ENCODE measurements at regions of chr2 and their contacts with region 1.

Region 1: DNA sequence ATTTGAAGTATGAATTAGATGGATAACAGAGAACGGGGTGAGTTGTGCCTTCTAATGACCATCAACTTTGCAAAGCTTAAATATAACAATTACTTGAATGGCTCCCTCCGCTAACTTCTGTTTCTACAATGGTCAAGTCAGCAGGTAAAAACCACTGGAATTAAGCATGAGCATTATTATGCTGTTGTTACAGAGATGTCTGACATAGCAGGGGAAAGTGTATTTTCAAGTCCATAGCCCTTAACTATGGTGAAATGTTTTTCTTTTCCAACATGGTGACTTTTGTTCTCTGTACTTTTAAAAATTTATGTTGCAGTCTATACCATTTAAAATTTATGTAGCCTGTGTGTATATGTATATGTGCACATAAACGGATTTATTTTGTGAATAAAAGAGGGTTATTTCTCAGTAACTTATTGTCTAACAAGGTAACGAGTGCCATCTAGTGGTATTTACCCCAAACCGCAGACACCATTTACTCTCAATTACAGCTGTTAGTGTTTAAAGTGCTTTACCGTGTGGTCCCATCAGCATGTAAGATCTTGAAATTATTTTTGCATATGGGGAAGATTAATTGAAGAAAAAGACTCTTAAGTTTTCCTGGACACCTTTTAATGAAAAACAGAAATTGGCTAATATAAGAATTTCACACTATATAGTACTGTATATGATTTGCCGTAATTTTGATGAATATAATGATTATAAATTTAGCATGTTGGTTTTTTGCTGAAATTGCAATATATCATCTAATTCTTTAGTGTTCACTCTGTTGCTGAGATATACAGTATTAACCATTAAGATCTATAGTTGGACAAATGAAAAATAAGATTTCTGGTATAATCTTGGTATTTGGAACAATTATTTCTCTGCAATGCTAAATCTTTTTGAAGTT is 78.2 kb downstream of the UBE2E3 start:
- DNase-seq: peak; percentile 49
- H3K4me3 Mint-ChIP-seq: no peak overlapping the region
- H3K27ac Mint-ChIP-seq: no peak overlapping the region
- H3K4me1 Mint-ChIP-seq: no peaks in the 10 kb centered on the region
- H3K27me3 Mint-ChIP-seq: no peaks in the 10 kb centered on the region

Region 2: DNA sequence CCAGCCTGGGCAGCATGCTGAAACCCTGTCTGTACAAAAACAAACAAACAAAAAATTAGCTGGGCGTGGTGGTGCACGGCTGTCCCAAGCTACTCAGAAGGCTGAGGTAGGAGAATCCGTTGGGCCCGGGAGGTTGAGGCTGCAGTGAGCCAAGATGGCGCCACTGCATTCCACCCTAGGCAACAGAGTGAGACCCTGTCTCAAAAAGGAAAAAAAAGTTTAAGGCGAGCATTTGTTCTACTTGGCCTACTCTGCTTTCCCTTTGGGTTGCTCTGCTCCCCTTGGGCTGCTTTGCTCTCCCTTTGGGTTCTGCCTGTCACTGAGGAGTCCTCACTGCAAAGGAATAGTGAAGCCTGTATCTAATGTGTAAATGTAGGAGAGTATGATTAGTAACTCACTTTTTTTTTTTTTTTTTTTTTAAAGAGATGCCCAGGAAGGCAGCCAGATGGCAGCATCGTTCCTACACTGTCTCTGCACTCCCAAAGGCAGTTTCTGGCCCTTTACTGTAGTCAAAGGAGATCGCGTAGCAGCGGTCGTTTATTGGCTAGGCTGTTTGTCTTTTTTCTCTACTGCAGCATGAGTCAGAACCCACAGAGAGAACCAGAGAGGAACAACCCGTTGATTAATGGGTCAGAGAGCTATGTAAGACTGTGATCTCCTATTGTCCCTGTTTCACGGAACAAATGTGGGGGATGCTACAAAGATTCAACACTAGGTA is 933.2 kb before region 1 on chr2:
- CTCF ChIA-PET with region 1: interaction called, 37 read pairs
- DNase-seq: peak; percentile 52
- H3K4me3 Mint-ChIP-seq: no peak overlapping the region
- H3K27ac Mint-ChIP-seq: no peak overlapping the region
- H3K4me1 Mint-ChIP-seq: no peaks in the 10 kb centered on the region
- H3K27me3 Mint-ChIP-seq: peaks cover 11% of the 10 kb centered on the region

Region 3: GRCh38 chr2:180983468-180984242 is 75.0 kb before region 1 on chr2:
- CTCF ChIA-PET with region 1: interaction called, 15 read pairs
- DNase-seq: peak; percentile 35
- H3K4me3 Mint-ChIP-seq: no peak overlapping the region
- H3K27ac Mint-ChIP-seq: no peak overlapping the region
- H3K4me1 Mint-ChIP-seq: peaks cover 40% of the 10 kb centered on the region
- H3K27me3 Mint-ChIP-seq: peaks cover 18% of the 10 kb centered on the region